ENCODE measurements at regions of chr15 and their contacts with region 1.

Region 1: GRCh38 chr15:60798821-60799220 is 319.9 kb upstream of the ICE2 start:
- DNase-seq: peak; percentile 79
- ATAC-seq: peak; percentile 83
- H3K4me3 ChIP-seq: no peak overlapping the region
- H3K27ac ChIP-seq: no peak overlapping the region
- H3K4me1 ChIP-seq: peaks cover 8% of the 10 kb centered on the region
- H3K27me3 ChIP-seq: no peaks in the 10 kb centered on the region
- CTCF ChIP-seq: no peak
- POLR2A ChIP-seq: no peak
- RAD21 ChIP-seq: no peak

Region 2: DNA sequence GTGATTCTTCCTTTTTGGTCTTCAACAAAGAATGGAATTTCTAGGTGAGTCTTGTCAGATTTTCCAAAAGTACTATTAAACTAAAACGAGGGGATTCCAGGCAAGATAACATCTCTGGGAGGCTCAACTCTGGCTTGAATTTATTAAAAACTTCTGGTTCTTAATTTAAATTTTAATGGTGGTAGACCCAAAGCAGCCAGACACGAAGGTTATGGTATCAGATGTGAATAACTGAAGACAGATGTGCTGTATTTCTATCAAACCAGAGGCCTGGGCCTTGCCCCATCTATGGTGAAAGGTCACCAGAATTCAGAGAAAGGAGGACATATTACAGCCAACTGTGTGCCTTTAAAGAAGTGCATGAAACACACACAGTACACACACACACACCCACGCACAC is 36.7 kb before region 1 on chr15:
- CTCF ChIA-PET with region 1: interaction called, 11 read pairs
- POLR2A ChIA-PET with region 1: no interaction called
- dilution Hi-C with region 1: no loop called
- in situ Hi-C with region 1: no loop called
- intact Hi-C with region 1: no loop called
- DNase-seq: no peak
- ATAC-seq: no peak
- H3K4me3 ChIP-seq: no peak overlapping the region
- H3K27ac ChIP-seq: no peak overlapping the region
- H3K4me1 ChIP-seq: peaks cover 22% of the 10 kb centered on the region
- H3K27me3 ChIP-seq: 0 out of 2 replicates have a peak, but pooled peaks cover 2% of the 10 kb centered on the region
- CTCF ChIP-seq: no peak
- POLR2A ChIP-seq: no peak
- RAD21 ChIP-seq: no peak

Region 3: DNA sequence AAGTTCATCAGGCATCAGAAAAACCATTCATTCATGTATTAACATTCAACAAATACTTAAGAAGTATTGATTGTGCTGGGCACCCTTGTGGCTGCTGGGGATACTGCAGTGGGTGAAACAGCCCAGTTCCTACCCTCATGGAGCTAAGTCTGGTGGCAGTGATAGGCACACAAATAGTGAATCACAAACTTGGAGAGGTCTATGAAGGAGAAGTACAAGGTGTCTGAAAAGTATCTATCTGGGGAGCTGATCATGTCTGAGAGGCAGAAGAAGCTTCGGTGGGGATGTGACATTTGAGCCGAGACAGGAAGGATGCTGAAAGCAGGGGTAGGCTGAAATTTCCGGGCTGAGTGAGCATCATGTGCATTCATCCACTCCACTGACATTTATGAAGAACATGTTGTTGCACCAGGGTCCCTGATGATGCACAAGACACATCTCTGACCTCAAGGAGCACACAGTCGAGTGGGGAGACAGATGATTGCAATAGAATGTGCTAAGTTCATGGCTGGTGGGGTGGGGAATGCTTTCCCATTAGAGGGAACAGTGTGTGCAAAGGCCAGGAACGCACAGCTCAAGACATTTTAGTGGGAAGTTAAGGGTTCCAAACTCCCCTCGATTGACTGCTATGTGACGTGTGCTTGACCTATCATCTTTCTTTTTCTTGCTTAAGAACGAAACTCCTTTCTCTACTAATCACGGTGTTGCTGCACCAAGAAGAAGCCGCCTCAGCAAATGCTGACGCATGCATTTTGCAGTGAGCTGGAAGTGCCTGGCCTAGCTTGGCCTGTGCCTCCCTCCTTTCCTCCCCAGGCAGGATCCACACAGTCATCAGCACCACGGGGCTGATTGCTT is 10.8 kb before region 1 on chr15:
- CTCF ChIA-PET with region 1: interaction called, 11 read pairs
- POLR2A ChIA-PET with region 1: no interaction called
- dilution Hi-C with region 1: no loop called
- in situ Hi-C with region 1: no loop called
- intact Hi-C with region 1: no loop called
- DNase-seq: no peak
- ATAC-seq: peak; percentile 53; the same call in 1 of the 2 replicates
- H3K4me3 ChIP-seq: no peak overlapping the region
- H3K27ac ChIP-seq: no peak overlapping the region
- H3K4me1 ChIP-seq: no peaks in the 10 kb centered on the region
- H3K27me3 ChIP-seq: peaks cover 11% of the 10 kb centered on the region
- CTCF ChIP-seq: peak; percentile 31; the same call in 1 of the 2 replicates
- POLR2A ChIP-seq: no peak
- RAD21 ChIP-seq: peak; percentile 32; the same call in 1 of the 2 replicates